ENCODE measurements at regions of chr17 and their contacts with region 1.

Region 1: DNA sequence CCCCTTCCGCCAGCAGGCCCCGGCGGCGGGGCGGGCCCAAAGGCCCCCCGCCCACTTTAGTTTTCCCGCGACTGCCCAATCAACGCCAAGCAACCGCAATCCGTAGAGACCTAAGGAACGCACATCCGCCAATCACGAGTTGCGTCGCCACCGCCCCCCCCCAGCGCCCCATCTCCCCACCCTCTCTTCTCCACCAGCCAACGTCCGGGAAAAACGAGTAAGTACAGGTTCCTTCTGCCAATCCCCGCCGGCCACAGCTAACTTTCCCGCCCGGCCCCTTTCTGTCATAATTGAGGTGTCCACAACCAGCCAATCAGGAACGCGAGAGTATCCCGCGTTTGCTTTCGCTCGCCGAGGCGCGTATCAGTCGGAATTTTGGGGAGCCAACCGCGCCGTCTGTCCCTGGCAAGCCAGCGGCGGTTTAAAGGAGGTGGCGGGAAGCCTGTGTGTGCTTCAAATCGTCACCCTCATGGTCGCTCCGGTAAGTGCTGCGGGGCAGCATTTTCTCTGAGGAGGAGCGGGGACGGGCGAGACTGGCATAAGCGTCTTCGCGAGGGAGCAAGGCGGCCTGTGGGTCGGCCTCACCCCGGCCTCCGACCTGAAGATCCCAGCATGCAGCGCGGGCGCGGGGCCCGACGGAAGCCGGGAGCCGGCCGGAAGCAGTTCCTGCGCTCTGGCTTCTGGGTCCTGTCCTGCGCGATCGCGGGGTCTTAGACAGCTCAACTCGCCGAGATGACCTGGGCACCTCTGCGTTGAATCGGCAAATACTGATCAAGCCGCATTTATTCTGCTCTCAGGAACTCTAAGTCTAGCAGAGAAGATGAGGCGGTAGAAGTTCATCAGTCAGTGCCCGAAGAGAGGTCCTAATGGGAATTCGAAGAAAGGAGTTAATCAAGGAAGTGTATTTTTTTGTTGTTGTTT is at the start of gene MIS12:
- DNase-seq: peak; percentile 90
- ATAC-seq: peak; percentile 95
- H3K4me3 Mint-ChIP-seq: peak within 1 kb of the TSS; percentile 99
- H3K27ac Mint-ChIP-seq: peak within 1 kb of the TSS; percentile 94
- H3K4me1 Mint-ChIP-seq: peaks cover 40% of the 10 kb centered on the region
- H3K27me3 Mint-ChIP-seq: no peaks in the 10 kb centered on the region
- total RNA-seq, gene MIS12: 38.4 to 39.5 TPM

Region 2: GRCh38 chr17:5381542-5381941 is 104.9 kb before region 1 on chr17:
- POLR2A ChIA-PET with region 1: no interaction called
- DNase-seq: no peak
- ATAC-seq: no peak
- H3K4me3 Mint-ChIP-seq: no peak overlapping the region
- H3K27ac Mint-ChIP-seq: no peak overlapping the region
- H3K4me1 Mint-ChIP-seq: no peaks in the 10 kb centered on the region
- H3K27me3 Mint-ChIP-seq: no peaks in the 10 kb centered on the region

Region 3: DNA sequence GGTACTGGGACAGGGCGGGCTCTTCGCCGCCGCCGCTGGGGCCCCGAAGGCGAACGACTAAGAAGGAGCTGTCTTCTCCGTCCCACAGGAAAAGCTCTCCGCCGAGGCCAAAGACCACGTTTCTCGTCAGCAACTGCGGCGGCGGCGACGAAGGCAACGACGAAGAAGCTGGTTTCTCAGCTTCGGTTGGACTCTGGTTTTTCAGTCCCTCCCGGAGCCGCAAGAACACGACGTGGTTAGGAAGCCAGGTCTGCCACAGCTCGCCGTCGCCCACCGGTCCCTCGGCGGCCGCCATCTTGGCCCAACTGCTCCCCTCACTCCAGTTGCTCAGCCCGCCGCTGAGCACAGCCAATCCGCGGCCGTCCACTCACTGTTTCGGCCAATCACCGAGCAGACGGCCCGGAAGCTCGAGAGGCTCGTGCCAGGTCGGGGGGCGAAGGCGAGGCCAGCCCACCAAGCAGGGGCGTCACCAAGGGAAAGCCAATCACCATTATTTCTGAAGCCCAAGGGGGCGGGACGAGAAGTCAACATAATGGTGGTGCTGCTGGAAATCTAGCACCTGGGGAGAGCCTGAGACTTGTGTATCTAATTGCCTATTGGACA is 67.0 kb before region 1 on chr17 and contains the start of gene NUP88:
- POLR2A ChIA-PET with region 1: interaction called, 21 read pairs
- DNase-seq: peak; percentile 94
- ATAC-seq: peak; percentile 97
- H3K4me3 Mint-ChIP-seq: peak within 1 kb of the TSS; percentile 100
- H3K27ac Mint-ChIP-seq: peak within 1 kb of the TSS; percentile 99
- H3K4me1 Mint-ChIP-seq: peaks cover 25% of the 10 kb centered on the region
- H3K27me3 Mint-ChIP-seq: no peaks in the 10 kb centered on the region
- total RNA-seq, gene NUP88: 93.6 to 99.5 TPM

Region 4: DNA sequence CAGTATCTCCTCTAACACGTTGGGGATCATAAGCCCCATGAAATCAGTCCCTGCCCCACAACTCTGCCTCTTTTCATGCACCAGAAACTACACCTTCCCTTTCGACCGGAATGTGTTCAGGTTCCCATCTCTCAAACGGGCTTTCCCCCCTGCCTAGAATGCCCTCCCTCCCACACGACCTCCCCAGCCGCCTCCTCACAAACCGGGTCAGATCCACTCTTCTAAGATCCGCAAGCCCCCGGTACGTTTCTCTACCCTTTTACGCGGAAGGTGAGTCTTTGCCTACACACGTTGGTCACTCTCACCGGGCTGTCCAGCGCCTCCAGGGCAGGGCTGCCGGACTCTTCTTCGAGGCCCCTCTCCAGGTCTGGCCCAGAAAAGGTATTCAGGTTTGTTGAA is 18.4 kb before region 1 on chr17:
- POLR2A ChIA-PET with region 1: interaction called, 33 read pairs
- DNase-seq: no peak
- ATAC-seq: peak; percentile 14
- H3K4me3 Mint-ChIP-seq: peak overlapping the region; percentile 87
- H3K27ac Mint-ChIP-seq: peak overlapping the region; percentile 47
- H3K4me1 Mint-ChIP-seq: peaks cover 38% of the 10 kb centered on the region
- H3K27me3 Mint-ChIP-seq: no peaks in the 10 kb centered on the region

Region 5: GRCh38 chr17:5500589-5501391 is 14.3 kb after region 1 on chr17:
- POLR2A ChIA-PET with region 1: interaction called, 29 read pairs
- DNase-seq: peak; percentile 72
- ATAC-seq: peak; percentile 95
- H3K4me3 Mint-ChIP-seq: peak overlapping the region; percentile 92
- H3K27ac Mint-ChIP-seq: peak overlapping the region; percentile 68
- H3K4me1 Mint-ChIP-seq: peaks cover 16% of the 10 kb centered on the region
- H3K27me3 Mint-ChIP-seq: peaks cover 4% of the 10 kb centered on the region

Region 6: DNA sequence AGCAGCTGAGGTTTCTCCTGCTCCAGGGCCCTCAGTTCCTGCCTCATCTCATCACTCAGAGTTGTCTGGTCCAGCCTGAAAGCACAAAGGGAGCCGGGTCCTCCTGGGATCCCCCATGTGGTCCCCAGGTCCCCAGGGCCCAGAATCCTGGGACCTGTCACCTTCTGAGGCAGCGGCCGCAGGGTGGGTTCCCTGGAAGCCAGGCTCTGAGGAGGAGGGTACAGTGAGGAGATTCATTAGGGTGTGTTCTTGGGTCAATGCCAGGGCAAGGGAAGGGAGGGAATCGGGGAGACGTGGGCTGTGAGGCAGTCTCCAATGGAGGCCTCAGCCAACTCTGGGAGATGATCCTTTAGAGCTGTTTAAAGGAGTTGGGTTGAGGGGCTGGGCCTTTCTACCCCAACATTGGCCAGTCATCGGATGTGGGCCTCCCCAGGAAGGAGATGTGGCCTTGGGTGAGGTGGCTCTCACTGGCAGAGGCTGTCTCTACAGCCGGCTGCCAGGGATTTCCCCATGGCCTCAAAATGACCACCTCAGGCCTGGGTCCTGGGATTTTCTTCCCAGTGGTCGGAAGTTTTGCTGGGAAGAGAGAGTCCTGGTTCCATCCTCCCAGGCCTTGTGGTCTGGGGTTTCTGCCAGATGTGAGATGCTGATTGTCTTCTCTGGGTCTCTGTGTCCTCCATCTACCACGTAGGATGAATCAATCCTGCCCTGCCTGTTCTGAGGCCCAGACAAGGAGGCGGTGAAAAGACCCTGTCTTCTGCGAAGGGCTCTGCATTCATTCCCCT is 50.6 kb after region 1 on chr17:
- POLR2A ChIA-PET with region 1: no interaction called
- DNase-seq: no peak
- ATAC-seq: no peak
- H3K4me3 Mint-ChIP-seq: no peak overlapping the region
- H3K27ac Mint-ChIP-seq: no peak overlapping the region
- H3K4me1 Mint-ChIP-seq: no peaks in the 10 kb centered on the region
- H3K27me3 Mint-ChIP-seq: no peaks in the 10 kb centered on the region

Region 7: DNA sequence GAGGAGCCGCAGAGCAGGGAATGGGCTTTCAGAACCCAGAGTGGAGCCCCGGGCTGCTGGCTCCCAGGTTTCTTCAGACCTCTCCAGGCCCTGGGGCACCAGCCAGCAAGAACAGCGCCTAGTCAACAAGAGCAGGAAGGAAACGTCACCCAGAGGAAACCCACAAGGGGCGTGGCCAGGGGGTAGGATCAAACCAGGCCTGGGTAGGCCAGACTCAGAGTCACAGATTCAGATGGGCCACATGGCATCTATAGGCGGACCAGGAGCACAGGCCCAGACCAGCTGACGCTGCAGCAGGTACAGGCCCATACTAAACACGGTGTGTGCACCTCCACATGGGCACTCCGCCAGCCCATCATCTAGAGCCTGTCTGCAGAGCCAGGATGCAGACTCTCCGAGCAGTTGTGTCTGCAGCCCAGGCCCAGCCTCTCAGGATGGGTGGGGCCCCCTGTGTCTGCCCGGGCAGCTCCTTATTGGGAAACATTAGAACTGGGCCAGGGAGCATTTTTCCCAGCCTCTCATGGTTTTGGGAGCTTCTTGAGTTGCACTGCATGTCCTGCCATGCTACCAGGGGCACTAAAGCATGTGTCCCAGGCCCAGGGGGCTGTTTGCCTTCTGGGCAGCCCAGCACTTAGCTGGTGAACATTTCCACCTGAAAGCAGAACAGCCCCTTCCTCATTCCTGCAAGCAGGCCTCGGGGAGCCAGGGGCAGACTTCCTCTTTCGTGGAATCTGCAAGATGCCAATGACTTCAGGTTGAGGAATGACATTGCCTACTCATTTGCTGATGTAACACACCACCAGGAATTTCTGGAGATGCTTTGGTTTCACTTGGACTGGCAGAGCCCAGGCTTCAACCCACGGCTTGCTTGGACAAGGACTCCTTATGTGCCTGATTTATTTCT is 98.2 kb after region 1 on chr17 and contains the start of gene NLRP1:
- POLR2A ChIA-PET with region 1: interaction called, 16 read pairs
- DNase-seq: peak; percentile 91
- ATAC-seq: peak; percentile 94
- H3K4me3 Mint-ChIP-seq: peak within 1 kb of the TSS; percentile 97
- H3K27ac Mint-ChIP-seq: peak within 1 kb of the TSS; percentile 97
- H3K4me1 Mint-ChIP-seq: peaks cover 36% of the 10 kb centered on the region
- H3K27me3 Mint-ChIP-seq: peaks cover 3% of the 10 kb centered on the region
- total RNA-seq, gene NLRP1: 120 to 126 TPM